Posterior cingulate gyrus (tissue), 11 donors: ENCODE measurements at regions of chr5 and their contacts with region 1.

Region 1: GRCh38 chr5:38494763-38495162 is 61.7 kb downstream of the LIFR start:
- DNase-seq: no peak

Region 2: DNA sequence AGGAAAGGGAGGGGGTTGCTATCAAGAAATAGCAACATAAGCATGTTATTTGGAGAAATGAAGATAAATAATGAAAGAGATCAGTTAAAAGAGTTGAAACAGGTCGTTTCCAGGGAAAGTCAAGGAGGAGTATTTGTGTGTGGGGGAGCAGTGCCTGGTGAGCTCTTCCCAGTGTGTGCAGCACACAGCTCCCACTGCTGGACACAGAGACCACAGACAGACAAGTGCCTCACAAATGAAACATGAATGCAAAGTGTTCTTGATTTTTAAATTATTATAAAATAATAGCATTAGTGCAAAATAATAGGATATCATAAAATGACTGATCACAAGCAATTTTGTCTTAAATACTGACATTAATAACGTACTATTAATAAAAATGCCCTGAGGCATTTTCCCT is 20.9 kb after region 1 on chr5:
- intact Hi-C with region 1: loop called (anchors 2 kb)
- DNase-seq: no peak